PC-3 (cell line): ENCODE measurements at regions of chr5 and their contacts with region 1.

Region 1: GRCh38 chr5:173513521-173513991 is 102.9 kb downstream of the BOD1 start:
- DNase-seq: peak; percentile 36
- ATAC-seq: peak; percentile 66
- H3K4me3 ChIP-seq: no peak overlapping the region
- H3K27ac ChIP-seq: peak overlapping the region; percentile 77
- H3K4me1 ChIP-seq: peaks cover 17% of the 10 kb centered on the region
- H3K27me3 ChIP-seq: no peaks in the 10 kb centered on the region
- CTCF ChIP-seq: no peak

Region 2: GRCh38 chr5:173293817-173294672 is 219.5 kb before region 1 on chr5:
- CTCF ChIA-PET with region 1: interaction called, 3 read pairs
- POLR2A ChIA-PET with region 1: no interaction called
- intact Hi-C with region 1: loop called (anchors 5 kb)
- DNase-seq: peak; percentile 91
- ATAC-seq: peak; percentile 83
- H3K4me3 ChIP-seq: peak overlapping the region; percentile 49; the same call in 1 of the 2 replicates
- H3K27ac ChIP-seq: no peak overlapping the region
- H3K4me1 ChIP-seq: peaks cover 6% of the 10 kb centered on the region; the same call in 1 of the 2 replicates
- H3K27me3 ChIP-seq: no peaks in the 10 kb centered on the region
- CTCF ChIP-seq: peak; percentile 94

Region 3: DNA sequence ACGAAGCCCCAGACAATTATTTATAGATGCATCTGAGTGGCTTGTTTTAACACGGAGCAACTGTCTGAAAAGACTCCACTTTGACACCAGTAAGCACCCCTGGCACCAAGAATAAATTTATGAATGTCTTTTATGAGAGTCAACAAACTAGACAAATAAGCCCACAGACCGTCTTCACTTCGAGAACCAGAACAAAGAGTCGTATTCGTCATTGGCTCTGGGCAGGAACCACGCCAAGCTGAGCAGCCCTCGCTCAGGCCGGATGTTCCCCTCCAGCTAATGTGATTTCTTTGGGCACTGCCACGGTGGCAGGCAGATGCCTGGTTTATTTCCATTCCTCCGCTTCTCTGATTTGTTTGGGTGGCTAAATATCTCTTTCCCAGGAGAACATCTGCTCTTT is 93.4 kb before region 1 on chr5:
- CTCF ChIA-PET with region 1: no interaction called
- POLR2A ChIA-PET with region 1: no interaction called
- intact Hi-C with region 1: loop called (anchors 5 kb)
- DNase-seq: peak; percentile 78
- ATAC-seq: peak; percentile 97
- H3K4me3 ChIP-seq: no peak overlapping the region
- H3K27ac ChIP-seq: peak overlapping the region; percentile 46
- H3K4me1 ChIP-seq: peaks cover 10% of the 10 kb centered on the region
- H3K27me3 ChIP-seq: no peaks in the 10 kb centered on the region
- CTCF ChIP-seq: no peak

Region 4: GRCh38 chr5:173451031-173451430 is 62.5 kb before region 1 on chr5:
- CTCF ChIA-PET with region 1: no interaction called
- POLR2A ChIA-PET with region 1: no interaction called
- intact Hi-C with region 1: loop called (anchors 1 kb)
- DNase-seq: peak; percentile 39
- ATAC-seq: no peak
- H3K4me3 ChIP-seq: no peak overlapping the region
- H3K27ac ChIP-seq: peak overlapping the region; percentile 95
- H3K4me1 ChIP-seq: peaks cover 45% of the 10 kb centered on the region
- H3K27me3 ChIP-seq: no peaks in the 10 kb centered on the region
- CTCF ChIP-seq: peak; percentile 70

Region 5: GRCh38 chr5:173472141-173472543 is 41.4 kb before region 1 on chr5:
- CTCF ChIA-PET with region 1: no interaction called
- POLR2A ChIA-PET with region 1: no interaction called
- intact Hi-C with region 1: loop called (anchors 1 kb)
- DNase-seq: peak; percentile 99
- ATAC-seq: peak; percentile 96
- H3K4me3 ChIP-seq: no peak overlapping the region
- H3K27ac ChIP-seq: peak overlapping the region; percentile 88
- H3K4me1 ChIP-seq: peaks cover 23% of the 10 kb centered on the region
- H3K27me3 ChIP-seq: no peaks in the 10 kb centered on the region
- CTCF ChIP-seq: no peak

Region 6: DNA sequence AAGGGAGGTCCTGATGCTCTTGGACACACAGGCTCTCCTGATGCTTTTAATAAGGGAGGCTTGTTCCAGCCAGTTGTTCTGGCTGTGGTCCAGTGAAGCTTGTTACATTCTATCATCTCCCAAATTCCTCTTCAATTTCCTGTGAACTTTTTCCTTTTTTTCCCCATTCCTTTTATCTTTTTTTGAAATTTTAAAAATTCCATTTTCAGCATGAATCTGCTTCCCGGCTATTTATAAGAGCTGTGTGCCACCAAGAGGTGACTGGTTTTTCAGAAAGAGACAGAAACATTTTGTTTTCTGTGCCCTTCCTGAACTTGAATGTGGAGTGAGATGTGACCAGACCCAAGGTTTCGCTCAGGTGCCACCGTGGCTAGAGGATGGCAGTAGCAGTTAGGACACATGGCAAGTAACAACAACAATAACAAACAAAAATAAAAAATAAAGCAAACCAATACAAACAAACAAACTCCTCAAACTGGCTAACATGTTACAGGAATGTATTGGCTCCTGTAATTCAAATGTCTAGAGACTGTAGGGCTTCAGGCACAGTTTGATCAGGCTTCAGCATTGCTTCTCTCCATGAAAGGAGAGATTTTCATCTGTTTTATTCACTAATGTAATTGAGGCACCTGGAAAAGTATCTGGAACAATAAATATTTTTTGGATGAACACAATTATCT is 18.2 kb before region 1 on chr5:
- CTCF ChIA-PET with region 1: no interaction called
- POLR2A ChIA-PET with region 1: no interaction called
- intact Hi-C with region 1: no loop called
- DNase-seq: no peak
- ATAC-seq: no peak
- H3K4me3 ChIP-seq: no peak overlapping the region
- H3K27ac ChIP-seq: no peak overlapping the region
- H3K4me1 ChIP-seq: no peaks in the 10 kb centered on the region
- H3K27me3 ChIP-seq: no peaks in the 10 kb centered on the region
- CTCF ChIP-seq: no peak

Region 7: DNA sequence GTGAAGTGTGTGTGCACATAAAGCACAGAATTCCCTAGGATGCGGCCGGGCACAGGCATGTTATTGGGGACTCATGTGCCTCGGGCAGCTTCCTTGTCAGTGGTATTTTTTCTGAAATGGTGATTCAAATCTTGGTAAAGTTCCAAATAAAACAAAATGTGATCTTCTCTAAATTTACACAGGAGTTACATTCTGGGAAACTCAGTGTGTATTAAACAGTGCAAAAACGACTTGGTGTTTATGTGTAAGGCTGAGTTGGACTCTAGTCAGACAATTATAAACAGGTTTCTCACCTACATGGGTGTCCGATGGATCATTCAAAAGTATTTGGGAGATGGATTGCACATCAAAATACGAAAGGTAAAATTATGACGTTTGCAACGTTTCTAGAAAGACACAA is 54.0 kb after region 1 on chr5:
- CTCF ChIA-PET with region 1: interaction called, 5 read pairs
- POLR2A ChIA-PET with region 1: no interaction called
- intact Hi-C with region 1: loop called (anchors 1 kb)
- DNase-seq: peak; percentile 97
- ATAC-seq: peak; percentile 84
- H3K4me3 ChIP-seq: 0 out of 2 replicates have a peak overlapping the region, but pooled peaks have one; percentile 9
- H3K27ac ChIP-seq: peak overlapping the region; percentile 80
- H3K4me1 ChIP-seq: peaks cover 25% of the 10 kb centered on the region
- H3K27me3 ChIP-seq: no peaks in the 10 kb centered on the region
- CTCF ChIP-seq: no peak

Region 8: DNA sequence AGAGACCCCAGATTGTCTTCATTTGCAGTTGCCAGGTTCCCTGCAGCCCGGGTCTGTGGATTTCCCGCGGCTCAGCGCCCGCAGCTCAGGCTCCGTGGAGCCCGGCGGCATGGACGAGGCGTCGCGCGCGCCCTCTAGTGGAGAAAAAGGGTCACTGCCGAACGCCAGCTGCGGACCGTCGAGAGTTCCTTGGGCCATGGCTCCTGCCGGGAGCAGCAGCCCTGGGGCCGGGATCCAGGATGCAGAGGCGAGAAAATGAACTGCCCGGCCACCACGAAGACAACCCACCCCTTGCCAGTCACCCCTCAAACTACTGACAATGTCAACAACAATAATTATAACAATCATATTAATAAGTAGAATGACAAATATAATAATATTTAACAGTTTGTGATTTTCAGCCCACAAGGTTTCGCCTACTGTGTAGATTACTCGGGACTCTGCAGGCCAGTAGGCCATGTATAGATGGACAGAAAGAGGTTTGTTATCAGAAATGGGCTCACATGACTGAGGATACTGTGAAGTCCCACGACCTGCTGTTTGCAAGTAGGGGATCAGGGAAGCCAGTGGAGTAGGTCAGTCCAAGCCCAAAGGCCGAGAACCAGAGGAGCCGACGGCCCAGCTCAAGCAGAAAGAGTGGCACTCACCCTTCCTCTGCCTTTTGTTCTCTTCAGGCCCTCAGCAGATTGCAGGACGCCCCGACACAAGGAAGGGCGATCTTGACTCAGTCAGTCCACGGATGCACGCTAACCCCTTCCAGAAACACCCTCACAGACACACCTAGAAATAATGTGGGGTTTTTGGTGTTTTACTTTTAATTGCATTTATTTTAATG is 59.8 kb after region 1 on chr5:
- CTCF ChIA-PET with region 1: interaction called, 5 read pairs
- POLR2A ChIA-PET with region 1: no interaction called
- intact Hi-C with region 1: loop called (anchors 1 kb)
- DNase-seq: peak; percentile 86
- ATAC-seq: peak; percentile 94
- H3K4me3 ChIP-seq: peak overlapping the region; percentile 46; the same call in 1 of the 2 replicates
- H3K27ac ChIP-seq: no peak overlapping the region
- H3K4me1 ChIP-seq: peaks cover 11% of the 10 kb centered on the region
- H3K27me3 ChIP-seq: no peaks in the 10 kb centered on the region
- CTCF ChIP-seq: peak; percentile 97